GM10248 (cell line): ENCODE measurements at regions of chr1 and their contacts with region 1.

Region 1: GRCh38 chr1:150955280-150955679 is 19.4 kb downstream of the CERS2 start:
- DNase-seq: no peak
- CTCF ChIP-seq: no peak

Region 2: DNA sequence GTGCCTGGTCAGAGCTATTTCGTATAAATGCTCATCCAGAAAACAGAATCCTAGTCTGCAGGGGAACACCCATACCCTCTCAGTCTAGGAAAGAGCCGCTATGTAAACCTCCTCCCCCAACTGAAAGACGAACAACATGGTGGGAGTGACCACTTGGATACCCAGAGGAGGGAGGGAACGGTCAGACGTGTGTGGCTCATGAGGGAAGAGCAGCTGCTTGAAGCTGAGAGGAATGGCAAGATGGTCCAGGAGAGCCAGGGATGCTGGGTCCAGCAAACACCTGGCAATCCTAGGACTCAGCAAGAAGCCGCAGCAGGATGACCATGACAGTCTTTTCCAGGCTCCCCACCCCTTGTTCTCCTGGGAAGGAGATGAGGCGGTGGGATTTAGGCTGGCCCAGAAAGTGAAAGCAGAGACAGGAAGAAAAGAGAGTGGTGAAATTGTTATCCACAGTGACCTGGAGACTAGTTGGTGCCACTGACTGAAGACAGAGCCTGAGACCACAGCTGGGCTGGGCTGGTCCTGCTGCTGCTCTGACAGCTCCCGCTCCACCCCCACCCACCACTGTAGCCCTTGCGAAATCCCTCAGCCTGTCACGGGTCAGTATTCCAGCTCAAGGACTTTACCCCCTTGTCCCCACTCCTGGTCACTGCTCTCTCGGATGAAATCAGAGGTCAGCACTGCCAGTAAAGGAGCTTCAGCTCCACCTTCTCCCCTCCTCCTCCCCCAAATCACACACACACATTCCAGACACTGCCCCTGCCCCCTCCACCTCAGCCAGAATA is 15.7 kb after region 1 on chr1:
- CTCF ChIA-PET with region 1: interaction called, 14 read pairs
- POLR2A ChIA-PET with region 1: interaction called, 3 read pairs
- DNase-seq: no peak
- CTCF ChIP-seq: no peak